Activated B cell treated with CpG ODN at 0.5 μM for 24 hours (primary cell): ENCODE measurements at regions of chr3 and their contacts with region 1.

Region 1: GRCh38 chr3:48507351-48508061 is 3.5 kb upstream of the SHISA5 start:
- DNase-seq: peak; percentile 56
- ATAC-seq: peak; percentile 88
- H3K4me3 Mint-ChIP-seq: peak overlapping the region; percentile 24
- H3K27ac Mint-ChIP-seq: no peak overlapping the region
- H3K4me1 Mint-ChIP-seq: peaks cover 15% of the 10 kb centered on the region
- H3K27me3 Mint-ChIP-seq: no peaks in the 10 kb centered on the region
- CTCF ChIP-seq: peak; percentile 28

Region 2: DNA sequence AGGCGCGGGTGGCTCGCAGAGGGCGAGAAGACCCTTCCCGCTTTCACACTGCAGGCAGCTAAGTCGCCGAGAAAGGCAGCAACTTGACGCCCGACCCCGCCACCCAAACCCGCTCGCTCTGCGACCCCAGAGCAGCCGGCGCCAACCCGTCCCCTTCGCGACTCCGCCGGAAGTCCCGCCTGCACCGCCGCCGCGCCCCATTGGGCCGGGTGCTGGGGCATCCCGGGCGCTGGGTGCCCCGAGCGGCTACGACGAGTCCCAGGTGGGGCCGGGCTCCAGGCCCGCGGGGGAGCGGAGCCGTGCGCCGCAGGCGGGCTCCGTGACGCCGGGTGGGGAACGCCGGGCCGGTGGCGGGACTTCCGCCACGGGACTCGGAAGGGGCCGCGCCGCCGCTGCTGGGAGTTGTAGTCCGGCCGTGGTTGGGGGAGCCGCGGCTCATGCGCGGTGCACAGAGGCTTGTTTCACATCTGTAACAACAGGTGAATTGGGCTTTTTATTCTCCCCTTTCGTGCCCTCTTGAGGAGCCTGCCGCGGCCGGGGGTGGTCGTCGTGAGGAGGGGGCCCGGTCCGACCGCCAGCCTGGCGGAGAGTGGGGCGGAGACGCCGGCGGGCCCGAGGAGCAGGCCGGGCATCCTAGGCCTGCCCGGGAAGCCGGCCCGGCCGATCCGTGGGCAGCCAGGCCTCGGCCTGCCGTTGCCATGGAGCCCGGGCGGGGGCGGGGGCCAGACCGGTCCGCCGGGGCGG is 704.6 kb before region 1 on chr3 and contains the start of gene DHX30:
- CTCF ChIA-PET with region 1: no interaction called
- POLR2A ChIA-PET with region 1: no interaction called
- intact Hi-C with region 1: no loop called
- DNase-seq: peak; percentile 87
- ATAC-seq: peak; percentile 93
- H3K4me3 Mint-ChIP-seq: peak within 1 kb of the TSS; percentile 93
- H3K27ac Mint-ChIP-seq: peak within 1 kb of the TSS; percentile 92
- H3K4me1 Mint-ChIP-seq: peaks cover 20% of the 10 kb centered on the region
- H3K27me3 Mint-ChIP-seq: no peaks in the 10 kb centered on the region
- CTCF ChIP-seq: no peak
- total RNA-seq, gene DHX30: 71.3 and 77.4 TPM in 2 replicates

Region 3: GRCh38 chr3:47824541-47825473 is 682.7 kb before region 1 on chr3:
- CTCF ChIA-PET with region 1: no interaction called
- POLR2A ChIA-PET with region 1: no interaction called
- intact Hi-C with region 1: no loop called
- DNase-seq: peak; percentile 79
- ATAC-seq: peak; percentile 98
- H3K4me3 Mint-ChIP-seq: peak overlapping the region; percentile 88
- H3K27ac Mint-ChIP-seq: peak overlapping the region; percentile 73
- H3K4me1 Mint-ChIP-seq: peaks cover 38% of the 10 kb centered on the region
- H3K27me3 Mint-ChIP-seq: no peaks in the 10 kb centered on the region
- CTCF ChIP-seq: peak; percentile 39

Region 4: DNA sequence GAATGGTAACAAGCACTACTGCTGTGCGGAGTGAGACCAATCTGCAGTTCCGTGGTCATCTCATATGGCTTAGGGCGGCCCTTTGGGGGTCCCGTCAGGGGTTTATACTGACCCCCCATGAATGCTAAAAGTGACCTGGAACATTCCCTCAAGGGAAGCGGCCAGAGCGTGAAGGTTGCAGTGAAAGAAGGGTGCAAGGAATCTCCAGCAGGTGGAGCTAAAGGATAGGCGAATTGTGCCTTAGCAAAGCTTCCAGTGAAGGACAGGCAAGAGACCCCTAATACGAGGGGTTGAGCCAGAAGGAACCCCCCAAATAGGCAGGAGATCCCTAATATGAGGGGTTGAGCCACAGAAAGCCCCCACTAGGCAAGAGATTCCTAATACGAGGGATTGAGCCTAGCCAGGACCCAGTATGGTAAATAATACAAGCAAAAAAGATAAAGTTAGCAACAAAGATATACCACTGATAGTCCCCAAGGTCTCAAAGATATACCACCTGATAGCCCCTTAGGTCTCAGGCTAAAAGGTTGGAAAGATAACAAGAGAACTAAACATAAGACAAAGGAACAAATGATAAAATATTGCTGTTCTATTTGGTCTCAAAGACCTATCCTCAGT is 233.8 kb before region 1 on chr3:
- CTCF ChIA-PET with region 1: interaction called, 4 read pairs
- POLR2A ChIA-PET with region 1: no interaction called
- intact Hi-C with region 1: loop called (anchors 1 kb)
- DNase-seq: peak; percentile 31
- ATAC-seq: peak; percentile 67
- H3K4me3 Mint-ChIP-seq: no peak overlapping the region
- H3K27ac Mint-ChIP-seq: no peak overlapping the region
- H3K4me1 Mint-ChIP-seq: no peaks in the 10 kb centered on the region
- H3K27me3 Mint-ChIP-seq: no peaks in the 10 kb centered on the region
- CTCF ChIP-seq: no peak

Region 5: GRCh38 chr3:48465531-48466378 is 41.8 kb before region 1 on chr3:
- CTCF ChIA-PET with region 1: interaction called, 42 read pairs
- POLR2A ChIA-PET with region 1: interaction called, 29 read pairs
- intact Hi-C with region 1: loop called (anchors 1 kb)
- DNase-seq: peak; percentile 86
- ATAC-seq: peak; percentile 95
- H3K4me3 Mint-ChIP-seq: peak overlapping the region; percentile 89
- H3K27ac Mint-ChIP-seq: peak overlapping the region; percentile 96
- H3K4me1 Mint-ChIP-seq: peaks cover 55% of the 10 kb centered on the region
- H3K27me3 Mint-ChIP-seq: no peaks in the 10 kb centered on the region
- CTCF ChIP-seq: no peak

Region 6: DNA sequence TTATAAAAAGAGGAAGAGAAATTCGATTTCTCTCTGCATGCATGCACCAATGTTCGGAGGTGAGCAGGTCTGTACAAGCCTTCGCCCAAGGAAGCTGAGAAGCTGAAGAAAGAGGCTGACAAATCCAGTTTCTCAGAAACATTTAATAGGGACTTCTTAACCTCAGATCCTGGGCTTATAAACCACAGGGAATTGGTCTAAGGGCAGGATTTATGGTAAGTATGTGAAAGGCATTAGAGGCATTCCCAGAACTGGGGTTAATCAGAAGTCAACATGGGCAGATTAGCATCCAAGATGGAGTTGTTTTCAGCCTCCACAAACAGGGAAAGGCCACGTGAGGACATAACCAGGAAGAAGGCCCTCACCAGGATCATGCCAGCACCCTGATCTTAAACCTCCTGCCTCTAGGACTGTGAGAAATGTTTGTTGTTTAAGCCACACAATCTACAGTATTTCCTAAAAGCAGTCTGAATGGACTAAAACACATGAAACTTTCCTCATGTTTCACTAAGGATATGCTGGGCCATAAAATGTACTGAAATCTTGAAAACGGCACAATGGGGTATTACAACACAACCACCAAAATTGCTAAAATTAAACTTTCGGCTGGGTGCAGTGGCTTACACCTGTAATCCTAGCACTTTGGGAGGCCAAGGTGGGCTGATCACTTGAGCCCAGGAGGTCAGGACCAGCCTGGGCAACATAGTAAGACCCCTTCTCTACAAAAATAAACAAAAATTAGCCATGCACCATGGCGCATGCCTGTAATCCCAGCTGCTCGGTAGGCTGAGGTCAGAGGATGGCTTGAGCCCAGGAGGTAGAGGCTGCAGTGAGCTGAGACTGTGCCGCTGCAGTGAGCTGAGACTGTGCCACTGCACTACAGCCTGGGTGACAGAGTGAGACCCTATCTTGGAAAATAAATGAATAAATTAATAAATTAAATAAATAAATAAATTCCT is 14.7 kb before region 1 on chr3:
- CTCF ChIA-PET with region 1: no interaction called
- POLR2A ChIA-PET with region 1: interaction called, 3 read pairs
- intact Hi-C with region 1: loop called (anchors 1 kb)
- DNase-seq: no peak
- ATAC-seq: peak; percentile 98
- H3K4me3 Mint-ChIP-seq: peak overlapping the region; percentile 38
- H3K27ac Mint-ChIP-seq: no peak overlapping the region
- H3K4me1 Mint-ChIP-seq: peaks cover 8% of the 10 kb centered on the region
- H3K27me3 Mint-ChIP-seq: no peaks in the 10 kb centered on the region
- CTCF ChIP-seq: no peak